ENCODE measurements at regions of chr19 and their contacts with region 1.

Region 1: DNA sequence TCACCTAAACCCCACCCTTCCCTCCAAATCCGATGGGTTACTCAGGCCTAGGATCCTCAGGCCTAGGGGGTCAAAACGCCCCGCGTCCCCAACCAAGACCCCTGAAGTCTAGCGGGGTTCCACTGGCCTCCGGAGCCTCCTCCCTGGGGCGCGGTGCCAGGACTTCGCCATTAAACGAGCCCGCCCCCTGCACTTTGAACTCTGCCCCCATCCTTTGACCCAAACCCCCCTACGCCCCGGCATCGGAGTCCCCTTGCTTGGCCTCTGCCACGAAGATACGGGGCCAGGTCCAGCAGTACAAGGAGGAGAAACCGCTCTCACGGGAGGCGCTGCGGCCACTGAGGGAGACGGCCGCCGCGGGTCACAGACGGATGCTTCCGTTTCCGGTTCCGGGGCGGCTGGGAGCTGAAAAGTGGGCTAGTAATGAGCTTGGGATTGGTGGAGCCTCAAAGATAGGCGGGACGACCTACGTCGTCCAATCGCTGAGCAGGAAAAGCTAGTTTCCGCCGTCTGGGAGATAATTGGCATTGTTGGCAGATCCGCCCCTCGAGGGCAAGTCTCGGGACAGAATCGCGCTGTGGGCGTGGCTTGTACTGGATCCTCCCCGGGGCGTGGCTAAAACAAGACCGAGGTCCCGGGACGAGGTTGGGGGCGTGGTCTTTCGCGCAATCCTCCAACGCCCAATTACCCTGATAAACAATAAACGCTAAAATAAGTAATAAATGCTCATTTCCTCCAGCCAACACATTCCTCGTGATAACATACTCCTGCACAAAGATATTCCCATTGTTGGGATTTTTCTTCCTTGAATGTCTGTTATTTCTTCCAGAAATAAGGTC is 5.7 kb upstream of the ZNF77 start:
- DNase-seq: peak; percentile 100
- H3K4me3 ChIP-seq: peak overlapping the region; percentile 16 to 82 (median 57)
- H3K27ac ChIP-seq: peak overlapping the region; percentile 95
- H3K4me1 ChIP-seq: peaks cover 27% of the 10 kb centered on the region
- H3K27me3 ChIP-seq: no peaks in the 10 kb centered on the region
- CTCF ChIP-seq: no peak
- POLR2A ChIP-seq: peak; percentile 74

Region 2: GRCh38 chr19:2840794-2841790 is 109.4 kb before region 1 on chr19 and contains the start of gene ZNF555:
- CTCF ChIA-PET with region 1: interaction called, 6 read pairs
- POLR2A ChIA-PET with region 1: interaction called, 3 read pairs
- dilution Hi-C with region 1: no loop called
- intact Hi-C with region 1: loop called (anchors 2 kb)
- DNase-seq: peak; percentile 99
- H3K4me3 ChIP-seq: peak within 1 kb of the TSS; percentile 67 to 86 (median 84)
- H3K27ac ChIP-seq: peak within 1 kb of the TSS; percentile 83
- H3K4me1 ChIP-seq: peaks cover 5% of the 10 kb centered on the region
- H3K27me3 ChIP-seq: no peaks in the 10 kb centered on the region
- CTCF ChIP-seq: peak; percentile 28 to 50
- POLR2A ChIP-seq: peak; percentile 15
- total RNA-seq, gene ZNF555: 4.7 and 5.4 TPM in 2 replicates

Region 3: DNA sequence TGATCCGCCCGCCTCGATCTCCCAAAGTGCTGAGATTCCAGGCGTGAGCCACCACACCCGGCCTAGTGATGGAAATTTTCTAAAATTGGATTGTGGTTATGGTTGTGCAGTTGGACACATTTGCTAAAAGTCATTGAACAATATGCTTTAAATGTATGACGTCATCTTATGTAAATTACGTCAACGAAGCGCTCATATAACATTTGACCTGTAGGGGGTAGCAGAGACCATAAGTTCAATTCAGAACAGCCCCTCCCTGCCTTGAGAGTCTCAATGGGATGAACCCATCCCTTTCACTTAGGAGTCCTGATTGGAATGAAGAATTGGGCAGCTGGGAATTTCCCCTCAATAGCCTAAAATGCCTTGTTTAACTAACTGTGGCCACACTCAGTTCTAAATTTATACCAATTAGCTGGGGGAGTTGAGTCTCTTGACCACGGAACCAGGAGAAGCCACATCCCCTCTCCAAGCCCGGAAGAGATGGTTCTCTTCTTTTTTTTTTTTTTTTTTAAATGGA is 11.6 kb after region 1 on chr19:
- CTCF ChIA-PET with region 1: interaction called, 15 read pairs
- POLR2A ChIA-PET with region 1: interaction called, 3 read pairs
- dilution Hi-C with region 1: no loop called
- intact Hi-C with region 1: no loop called
- DNase-seq: peak; percentile 89
- H3K4me3 ChIP-seq: no peak overlapping the region
- H3K27ac ChIP-seq: no peak overlapping the region
- H3K4me1 ChIP-seq: no peaks in the 10 kb centered on the region
- H3K27me3 ChIP-seq: no peaks in the 10 kb centered on the region
- CTCF ChIP-seq: peak; percentile 51 to 52
- POLR2A ChIP-seq: no peak

Region 4: DNA sequence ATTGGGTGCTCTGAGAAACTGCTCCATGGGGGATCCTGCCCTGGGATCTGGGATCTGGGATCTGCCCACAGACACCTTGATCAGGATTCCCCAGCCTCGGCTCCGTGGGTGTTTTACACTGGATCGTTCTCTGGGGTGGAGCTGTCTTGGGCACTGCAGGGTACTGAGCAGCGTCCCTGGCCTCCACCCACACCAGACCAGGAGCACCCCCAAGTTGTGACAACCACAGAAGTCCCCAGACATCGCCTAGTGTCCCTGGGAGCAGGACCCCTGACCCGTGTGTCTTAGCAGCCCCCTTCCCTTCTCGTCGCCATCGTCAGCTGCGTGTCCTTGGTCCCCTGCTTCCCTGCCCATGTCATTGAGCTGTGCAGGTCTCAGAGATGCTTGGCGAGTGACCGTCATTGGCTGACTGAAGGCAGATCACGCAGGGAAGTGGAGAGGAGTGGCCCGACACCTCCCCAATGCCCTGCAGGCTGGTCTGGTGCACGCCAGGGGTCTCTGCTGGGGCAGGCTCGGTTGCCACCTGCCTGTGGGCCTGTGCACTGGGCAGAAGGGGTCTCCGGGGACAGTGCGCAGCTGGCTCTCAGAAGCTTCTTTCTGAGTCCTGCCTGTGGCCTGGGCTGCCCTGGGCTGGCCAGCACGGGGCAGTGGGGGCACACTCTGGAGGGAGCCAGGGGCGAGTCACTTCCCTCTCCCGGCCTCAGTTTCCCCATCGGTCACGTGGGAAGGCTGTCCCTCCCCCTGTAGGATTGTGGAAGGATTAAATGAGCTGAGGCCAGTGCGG is 149.8 kb after region 1 on chr19:
- CTCF ChIA-PET with region 1: interaction called, 200 read pairs
- POLR2A ChIA-PET with region 1: interaction called, 7 read pairs
- dilution Hi-C with region 1: no loop called
- intact Hi-C with region 1: loop called (anchors 1 kb)
- DNase-seq: no peak
- H3K4me3 ChIP-seq: no peak overlapping the region
- H3K27ac ChIP-seq: no peak overlapping the region
- H3K4me1 ChIP-seq: peaks cover 34% of the 10 kb centered on the region
- H3K27me3 ChIP-seq: no peaks in the 10 kb centered on the region
- CTCF ChIP-seq: no peak
- POLR2A ChIP-seq: no peak

Region 5: DNA sequence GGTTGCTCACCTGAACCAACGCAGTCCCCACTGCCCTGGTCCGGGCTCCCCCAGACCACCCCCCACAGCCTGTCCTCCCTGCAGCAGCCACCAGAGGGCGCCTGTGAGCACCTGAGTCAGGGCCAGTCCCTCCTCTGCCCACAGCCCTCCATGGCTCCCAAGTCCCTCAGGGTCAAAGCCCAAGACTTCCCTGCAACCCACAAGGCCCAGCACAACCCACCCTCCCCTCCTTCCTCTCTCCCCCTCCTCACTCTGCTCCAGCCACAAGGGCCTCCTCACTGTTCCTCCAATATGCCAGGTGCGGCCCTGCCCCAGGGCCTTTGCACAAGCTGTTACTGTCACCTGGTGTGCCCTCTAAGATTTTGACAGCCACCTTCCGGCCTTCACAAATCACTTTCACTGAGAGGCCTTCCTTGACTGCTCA is 196.2 kb after region 1 on chr19:
- CTCF ChIA-PET with region 1: interaction called, 6 read pairs
- POLR2A ChIA-PET with region 1: interaction called, 6 read pairs
- dilution Hi-C with region 1: no loop called
- intact Hi-C with region 1: loop called (anchors 1 kb)
- DNase-seq: no peak
- H3K4me3 ChIP-seq: no peak overlapping the region
- H3K27ac ChIP-seq: no peak overlapping the region
- H3K4me1 ChIP-seq: peaks cover 13% of the 10 kb centered on the region
- H3K27me3 ChIP-seq: no peaks in the 10 kb centered on the region
- CTCF ChIP-seq: peak; percentile 83 to 94
- POLR2A ChIP-seq: no peak

Region 6: GRCh38 chr19:3210347-3211017 is 260.0 kb after region 1 on chr19:
- CTCF ChIA-PET with region 1: interaction called, 15 read pairs
- POLR2A ChIA-PET with region 1: no interaction called
- dilution Hi-C with region 1: no loop called
- intact Hi-C with region 1: loop called (anchors 2 kb)
- DNase-seq: peak; percentile 40
- H3K4me3 ChIP-seq: no peak overlapping the region
- H3K27ac ChIP-seq: no peak overlapping the region
- H3K4me1 ChIP-seq: no peaks in the 10 kb centered on the region
- H3K27me3 ChIP-seq: no peaks in the 10 kb centered on the region
- CTCF ChIP-seq: peak; percentile 74 to 91
- POLR2A ChIP-seq: no peak

Measured in endothelial cell of umbilical vein (primary cell).